HEK293 (cell line): ENCODE measurements at regions of chr22 and their contacts with region 1.

Region 1: GRCh38 chr22:41381329-41382097 is at the start of gene TEF:
- H3K4me3 ChIP-seq: peak within 1 kb of the TSS; percentile 66
- H3K27ac ChIP-seq: peak within 1 kb of the TSS; percentile 75
- H3K4me1 ChIP-seq: peaks cover 9% of the 10 kb centered on the region
- CTCF ChIP-seq: no peak

Region 2: DNA sequence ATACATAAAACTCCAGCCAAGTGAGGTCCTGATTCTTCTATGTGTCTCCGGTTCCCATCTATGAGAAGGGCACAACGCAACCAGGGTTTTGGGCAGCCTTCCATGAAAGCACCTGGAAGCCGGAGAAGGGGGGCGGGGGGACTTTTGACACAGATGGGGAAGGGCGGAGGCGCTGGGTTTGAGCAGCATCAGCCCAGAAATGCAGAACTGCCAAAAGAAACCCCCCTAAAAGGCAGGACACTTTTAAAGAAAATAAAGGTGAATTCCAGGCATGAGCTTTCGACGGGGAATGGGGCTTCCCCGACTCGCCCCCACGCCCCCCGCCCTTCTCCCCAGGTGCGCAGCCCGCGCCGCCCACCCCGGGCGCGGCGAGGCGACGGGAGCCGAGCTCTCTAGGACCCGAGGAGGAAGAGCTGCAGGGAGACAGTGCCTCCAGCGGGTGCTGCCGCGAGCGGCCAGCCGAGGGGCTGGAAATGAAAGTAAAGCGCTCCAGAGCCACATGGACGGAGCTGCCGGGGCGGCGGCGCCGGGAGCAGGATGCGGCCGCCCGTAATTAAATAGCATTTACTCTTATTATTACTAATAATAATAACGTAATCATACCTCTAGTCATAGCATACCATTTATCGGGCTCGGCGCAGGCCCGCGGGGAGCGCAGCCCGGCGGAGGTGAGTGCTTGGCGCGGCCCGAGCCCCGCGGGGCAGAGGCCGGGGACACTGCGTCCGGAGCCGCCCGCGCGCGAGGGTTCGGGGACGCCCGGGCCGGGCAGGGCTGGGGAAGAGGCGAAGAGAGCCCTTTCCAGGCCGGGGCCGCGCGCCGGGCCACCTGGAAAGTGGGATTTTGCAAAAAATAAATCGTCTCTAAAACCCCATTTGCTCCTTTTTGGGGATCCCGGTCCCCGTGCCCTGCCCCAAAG is 80.2 kb before region 1 on chr22 and contains the start of gene ZC3H7B:
- CTCF ChIA-PET with region 1: no interaction called
- POLR2A ChIA-PET with region 1: interaction called, 13 read pairs
- H3K4me3 ChIP-seq: peak within 1 kb of the TSS; percentile 82
- H3K27ac ChIP-seq: peak within 1 kb of the TSS; percentile 93
- H3K4me1 ChIP-seq: peaks cover 4% of the 10 kb centered on the region; the same call in 1 of the 2 replicates
- CTCF ChIP-seq: peak; percentile 82

Region 3: DNA sequence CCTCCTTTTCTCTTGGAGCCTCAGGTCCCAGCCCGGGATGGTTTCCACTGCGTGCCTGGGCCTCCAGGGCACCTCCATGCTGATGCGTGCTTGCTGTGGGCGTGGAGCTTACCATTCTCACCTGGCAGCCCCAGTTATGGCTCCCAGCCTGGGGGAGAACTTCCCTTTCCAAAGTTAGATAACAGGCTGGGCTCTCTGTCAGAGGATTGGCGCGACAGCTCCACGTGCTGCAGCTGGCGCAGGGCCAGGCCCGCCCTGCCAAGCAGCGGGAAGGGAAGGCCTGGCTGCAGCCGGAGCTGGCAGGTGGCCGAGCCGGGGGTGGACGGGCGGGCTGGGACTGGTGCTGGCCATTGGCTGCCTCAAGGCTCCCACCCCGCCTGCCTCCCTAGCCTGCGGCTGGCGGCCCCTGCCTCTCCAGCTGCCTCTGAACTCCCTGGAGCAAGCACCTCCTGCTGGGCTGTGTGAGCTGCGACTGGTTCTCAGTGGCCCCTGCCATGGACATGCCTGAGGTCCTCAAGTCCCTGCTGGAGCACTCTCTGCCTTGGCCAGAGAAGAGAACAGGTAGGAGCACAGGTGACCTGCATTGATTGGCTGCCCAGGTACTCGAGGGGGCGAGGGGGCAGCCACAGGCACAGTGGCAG is 14.4 kb before region 1 on chr22:
- CTCF ChIA-PET with region 1: interaction called, 4 read pairs
- POLR2A ChIA-PET with region 1: interaction called, 32 read pairs
- H3K4me3 ChIP-seq: peak overlapping the region; percentile 12; the same call in 1 of the 2 replicates
- H3K27ac ChIP-seq: peak overlapping the region; percentile 51; the same call in 1 of the 2 replicates
- H3K4me1 ChIP-seq: peaks cover 11% of the 10 kb centered on the region
- CTCF ChIP-seq: peak; percentile 56